ENCODE measurements at regions of chr5 and their contacts with region 1.

Region 1: GRCh38 chr5:112707187-112708102 is 30.2 kb upstream of the APC start:
- DNase-seq: peak; percentile 99

Region 2: DNA sequence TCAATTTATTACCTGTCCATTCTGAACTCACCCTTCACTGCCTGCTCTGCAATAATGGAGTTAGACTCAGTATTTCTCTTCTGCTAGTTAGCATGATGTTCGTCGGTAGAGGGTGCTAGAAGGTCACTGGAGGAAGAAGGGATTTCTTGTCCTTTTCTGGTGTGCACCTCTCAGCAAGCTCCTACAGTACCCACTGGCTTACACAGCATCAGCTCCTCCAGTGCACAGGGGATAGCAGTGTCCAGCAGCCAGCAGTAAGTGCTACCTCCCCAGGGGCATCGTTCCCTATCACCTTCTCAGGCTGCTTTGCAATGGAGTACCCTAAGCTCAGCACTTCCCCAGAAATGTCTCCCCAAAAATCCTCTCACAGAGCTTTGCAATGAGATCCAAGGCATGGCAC is 15.7 kb before region 1 on chr5:
- CTCF ChIA-PET with region 1: interaction called, 13 read pairs
- POLR2A ChIA-PET with region 1: interaction called, 3 read pairs
- DNase-seq: peak; percentile 52

Region 3: DNA sequence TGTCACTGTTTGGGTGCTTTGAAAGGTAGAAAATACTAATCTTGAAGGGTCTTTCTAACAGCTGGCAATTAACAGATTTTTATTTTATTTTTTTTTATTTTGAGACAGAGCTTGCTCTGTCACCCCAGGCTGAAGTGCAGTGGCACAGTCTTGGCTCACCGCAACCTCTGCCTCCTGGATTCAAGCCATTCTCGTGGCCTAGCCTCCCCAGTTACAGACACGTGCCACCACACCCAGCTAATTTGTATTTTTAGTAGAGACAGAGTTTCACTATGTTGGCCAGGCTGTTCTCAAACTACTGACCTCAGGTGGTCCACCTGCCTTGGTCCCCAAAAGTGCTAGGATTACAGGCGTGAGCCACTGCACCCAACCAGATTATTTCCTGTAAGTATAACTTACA is 17.5 kb after region 1 on chr5:
- CTCF ChIA-PET with region 1: no interaction called
- POLR2A ChIA-PET with region 1: interaction called, 10 read pairs
- DNase-seq: no peak

Region 4: GRCh38 chr5:112737463-112738190 is 30.2 kb after region 1 on chr5 and contains the start of gene APC:
- CTCF ChIA-PET with region 1: no interaction called
- POLR2A ChIA-PET with region 1: interaction called, 13 read pairs
- DNase-seq: peak; percentile 86

Measured in HEK293T (cell line).